HEK293T (cell line): ENCODE measurements at regions of chr11 and their contacts with region 1.

Region 1: GRCh38 chr11:66371627-66372415 is at the start of gene SLC29A2:
- DNase-seq: peak; percentile 85

Region 2: GRCh38 chr11:65945430-65945911 is 426.4 kb before region 1 on chr11 and contains the start of gene TSGA10IP:
- CTCF ChIA-PET with region 1: no interaction called
- POLR2A ChIA-PET with region 1: no interaction called
- DNase-seq: no peak

Region 3: GRCh38 chr11:66251809-66252208 is 120.0 kb before region 1 on chr11:
- CTCF ChIA-PET with region 1: no interaction called
- POLR2A ChIA-PET with region 1: no interaction called
- DNase-seq: no peak

Region 4: GRCh38 chr11:66317723-66318599 is 53.9 kb before region 1 on chr11:
- CTCF ChIA-PET with region 1: no interaction called
- POLR2A ChIA-PET with region 1: no interaction called
- DNase-seq: no peak

Region 5: GRCh38 chr11:66344550-66345315 is 27.1 kb before region 1 on chr11 and contains the start of gene BRMS1:
- CTCF ChIA-PET with region 1: no interaction called
- POLR2A ChIA-PET with region 1: interaction called, 19 read pairs
- DNase-seq: peak; percentile 93

Region 6: GRCh38 chr11:66386171-66387069 is 14.6 kb after region 1 on chr11:
- CTCF ChIA-PET with region 1: interaction called, 13 read pairs
- POLR2A ChIA-PET with region 1: interaction called, 19 read pairs
- DNase-seq: peak; percentile 68